ENCODE measurements at regions of chr22 and their contacts with region 1.

Region 1: DNA sequence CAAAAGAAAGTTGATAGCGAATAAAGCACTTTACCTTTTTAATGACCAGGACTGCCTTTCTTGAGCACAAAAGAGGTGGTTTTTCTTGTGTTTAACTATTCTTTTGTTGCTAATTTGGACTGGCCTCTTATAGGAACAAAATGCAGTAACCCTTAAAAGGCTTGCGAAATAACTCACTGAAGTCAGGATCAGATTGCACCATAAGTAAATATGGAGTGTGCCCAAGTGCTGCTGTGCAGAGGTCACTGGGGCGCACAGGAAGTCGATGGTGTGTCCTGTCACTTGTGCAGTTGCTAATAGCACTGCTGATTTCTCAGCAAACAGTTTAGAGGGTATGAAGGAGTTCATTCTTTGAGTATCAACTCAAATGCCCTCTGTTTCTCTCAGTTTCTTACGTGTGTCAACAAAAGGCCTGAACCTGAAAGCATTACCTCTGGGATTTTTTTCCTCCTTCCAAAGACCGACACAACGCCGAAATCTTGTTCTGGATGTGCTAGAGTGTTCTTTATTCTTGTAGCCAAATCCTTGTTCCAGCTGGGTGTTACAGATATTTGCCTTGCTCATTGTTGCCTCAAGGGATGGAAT is 71.3 kb downstream of the ATXN10 start:
- DNase-seq: no peak
- H3K4me3 ChIP-seq: no peak overlapping the region
- H3K27ac ChIP-seq: no peak overlapping the region
- H3K4me1 ChIP-seq: peaks cover 11% of the 10 kb centered on the region
- H3K27me3 ChIP-seq: no peaks in the 10 kb centered on the region
- CTCF ChIP-seq: no peak
- POLR2A ChIP-seq: no peak

Region 2: DNA sequence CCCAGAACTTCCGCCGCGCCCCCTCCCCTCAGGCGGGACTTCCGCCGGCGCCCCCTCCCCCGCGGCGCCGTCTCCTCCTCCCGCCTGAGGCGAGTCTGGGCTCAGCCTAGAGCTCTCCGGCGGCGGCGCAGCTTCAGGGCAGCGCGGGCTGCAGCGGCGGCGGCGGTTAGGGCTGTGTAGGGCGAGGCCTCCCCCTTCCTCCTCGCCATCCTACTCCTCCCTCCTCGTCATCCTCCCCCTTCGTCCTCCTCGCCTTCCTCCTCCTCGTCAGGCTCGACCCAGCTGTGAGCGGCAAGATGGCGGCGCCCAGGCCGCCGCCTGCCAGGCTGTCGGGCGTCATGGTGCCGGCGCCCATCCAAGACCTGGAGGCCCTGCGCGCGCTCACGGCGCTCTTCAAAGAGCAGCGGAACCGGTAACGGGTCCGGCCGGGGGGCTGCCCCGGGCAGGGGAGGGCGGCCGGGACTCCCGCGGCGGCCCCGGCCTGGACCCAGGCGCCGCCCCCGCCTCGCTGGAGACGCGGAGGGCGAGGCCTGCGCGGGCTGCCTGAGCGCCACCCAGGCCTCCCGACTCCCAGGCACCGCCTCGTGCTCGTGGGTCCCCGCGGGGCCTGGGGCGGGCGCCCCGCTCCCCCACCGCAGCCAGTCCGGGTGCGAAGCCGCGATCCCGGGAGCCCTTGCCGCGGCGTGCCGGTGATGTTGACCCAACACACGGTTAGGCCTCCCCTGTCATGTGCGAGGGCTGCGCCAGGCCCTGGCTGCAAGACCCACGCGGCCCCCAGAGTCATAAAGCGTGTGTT is 71.0 kb before region 1 on chr22 and contains the start of gene ATXN10:
- CTCF ChIA-PET with region 1: no interaction called
- POLR2A ChIA-PET with region 1: no interaction called
- dilution Hi-C with region 1: no loop called
- intact Hi-C with region 1: loop called (anchors 5 kb)
- DNase-seq: peak; percentile 77
- H3K4me3 ChIP-seq: peak within 1 kb of the TSS; percentile 48 to 80 (median 57)
- H3K27ac ChIP-seq: peak within 1 kb of the TSS; percentile 29
- H3K4me1 ChIP-seq: peaks cover 12% of the 10 kb centered on the region
- H3K27me3 ChIP-seq: peaks cover 0 to 2% of the 10 kb centered on the region in 2 experiments
- CTCF ChIP-seq: no peak
- POLR2A ChIP-seq: peak; percentile 31
- total RNA-seq, gene ATXN10: 91.9 and 107 TPM in 2 replicates

Region 3: GRCh38 chr22:45703758-45704157 is 39.2 kb before region 1 on chr22:
- CTCF ChIA-PET with region 1: interaction called, 3 read pairs
- POLR2A ChIA-PET with region 1: no interaction called
- dilution Hi-C with region 1: no loop called
- intact Hi-C with region 1: loop called (anchors 5 kb)
- DNase-seq: no peak
- H3K4me3 ChIP-seq: no peak overlapping the region
- H3K27ac ChIP-seq: no peak overlapping the region
- H3K4me1 ChIP-seq: no peaks in the 10 kb centered on the region
- H3K27me3 ChIP-seq: no peaks in the 10 kb centered on the region
- CTCF ChIP-seq: no peak
- POLR2A ChIP-seq: no peak

Measured in endothelial cell of umbilical vein (primary cell).